ENCODE measurements at regions of chr21 and their contacts with region 1.

Region 1: GRCh38 chr21:32770871-32771523 is 558 bp downstream of the PAXBP1 start:
- DNase-seq: peak; percentile 69
- H3K4me3 Mint-ChIP-seq: peak overlapping the region; percentile 98
- H3K27ac Mint-ChIP-seq: peak overlapping the region; percentile 93
- H3K4me1 Mint-ChIP-seq: peaks cover 61% of the 10 kb centered on the region
- H3K27me3 Mint-ChIP-seq: peaks cover 3% of the 10 kb centered on the region

Region 2: DNA sequence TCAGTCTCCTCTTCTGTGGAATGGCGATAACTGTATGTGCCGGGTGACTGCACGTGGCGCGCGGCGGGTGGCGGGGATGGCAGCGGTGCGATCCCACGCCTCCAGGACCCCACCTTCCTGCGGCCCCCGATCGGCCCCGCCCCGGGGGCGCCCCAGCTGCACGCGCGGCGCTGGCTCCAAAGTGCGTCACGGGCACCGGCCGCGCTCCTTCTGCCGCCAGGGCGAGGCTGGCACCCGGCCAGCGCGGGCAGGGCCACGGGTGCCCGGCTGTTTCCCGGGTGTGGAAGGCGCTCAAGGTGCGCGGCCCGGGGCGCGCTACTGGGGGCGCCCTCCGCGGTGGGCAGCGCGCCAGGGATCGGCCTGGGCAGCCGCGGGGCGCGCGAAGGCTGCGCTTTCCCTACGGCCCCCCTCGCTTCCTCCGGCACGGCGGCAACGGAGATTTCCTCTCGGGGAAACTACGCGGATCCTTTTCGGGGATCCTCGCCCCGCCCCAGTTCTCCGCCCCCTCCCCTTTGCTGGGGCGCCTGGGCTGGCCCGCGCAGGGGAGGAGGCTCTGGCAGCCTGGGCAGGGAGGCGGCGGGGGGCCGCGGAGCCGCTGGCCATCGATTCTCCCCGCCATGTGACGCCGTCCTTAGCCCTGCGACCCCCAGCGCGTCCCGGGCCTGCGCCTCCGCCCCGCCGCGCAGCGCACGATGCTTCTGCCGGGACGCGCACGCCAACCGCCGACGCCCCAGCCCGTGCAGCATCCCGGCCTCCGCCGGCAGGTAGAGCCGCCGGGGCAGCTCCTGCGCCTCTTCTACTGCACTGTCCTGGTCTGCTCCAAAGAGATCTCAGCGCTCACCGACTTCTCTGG is 358.6 kb before region 1 on chr21 and contains the start of gene EVA1C:
- CTCF ChIA-PET with region 1: no interaction called
- POLR2A ChIA-PET with region 1: no interaction called
- intact Hi-C with region 1: loop called (anchors 1 kb)
- DNase-seq: peak; percentile 76
- H3K4me3 Mint-ChIP-seq: peak within 1 kb of the TSS; percentile 91
- H3K27ac Mint-ChIP-seq: peak within 1 kb of the TSS; percentile 89
- H3K4me1 Mint-ChIP-seq: peaks cover 33% of the 10 kb centered on the region
- H3K27me3 Mint-ChIP-seq: no peaks in the 10 kb centered on the region
- total RNA-seq, gene EVA1C: 9.3 to 9.6 TPM

Region 3: DNA sequence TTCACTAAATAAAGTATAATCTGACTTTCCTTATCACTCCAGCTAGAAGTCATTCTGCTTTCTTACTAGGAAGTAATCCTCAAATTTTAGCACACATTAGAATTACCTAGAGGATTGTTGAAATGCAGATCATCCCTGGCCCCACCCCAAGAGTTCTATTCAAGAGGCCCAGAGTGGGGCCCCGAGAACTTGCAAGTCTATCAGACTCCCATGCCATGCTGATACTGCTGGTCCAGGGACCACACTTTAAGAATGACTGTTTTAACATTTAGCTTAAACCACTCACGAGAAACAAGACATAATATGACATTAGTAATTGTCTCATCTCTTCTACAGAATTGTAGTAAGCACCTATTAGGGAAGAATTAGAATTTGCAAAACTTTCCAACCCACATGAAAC is 35.5 kb before region 1 on chr21:
- CTCF ChIA-PET with region 1: interaction called, 4 read pairs
- POLR2A ChIA-PET with region 1: interaction called, 10 read pairs
- intact Hi-C with region 1: no loop called
- DNase-seq: peak; percentile 36
- H3K4me3 Mint-ChIP-seq: no peak overlapping the region
- H3K27ac Mint-ChIP-seq: peak overlapping the region; percentile 46
- H3K4me1 Mint-ChIP-seq: peaks cover 48% of the 10 kb centered on the region
- H3K27me3 Mint-ChIP-seq: no peaks in the 10 kb centered on the region

Region 4: GRCh38 chr21:32858628-32859027 is 87.6 kb after region 1 on chr21:
- CTCF ChIA-PET with region 1: no interaction called
- POLR2A ChIA-PET with region 1: no interaction called
- intact Hi-C with region 1: no loop called
- DNase-seq: no peak
- H3K4me3 Mint-ChIP-seq: no peak overlapping the region
- H3K27ac Mint-ChIP-seq: no peak overlapping the region
- H3K4me1 Mint-ChIP-seq: no peaks in the 10 kb centered on the region
- H3K27me3 Mint-ChIP-seq: peaks cover 12% of the 10 kb centered on the region

Region 5: GRCh38 chr21:32929633-32930038 is 158.6 kb after region 1 on chr21:
- CTCF ChIA-PET with region 1: interaction called, 3 read pairs
- POLR2A ChIA-PET with region 1: no interaction called
- intact Hi-C with region 1: loop called (anchors 2 kb)
- DNase-seq: peak; percentile 34
- H3K4me3 Mint-ChIP-seq: peak overlapping the region; percentile 33
- H3K27ac Mint-ChIP-seq: peak overlapping the region; percentile 43
- H3K4me1 Mint-ChIP-seq: peaks cover 40% of the 10 kb centered on the region
- H3K27me3 Mint-ChIP-seq: no peaks in the 10 kb centered on the region

Region 6: DNA sequence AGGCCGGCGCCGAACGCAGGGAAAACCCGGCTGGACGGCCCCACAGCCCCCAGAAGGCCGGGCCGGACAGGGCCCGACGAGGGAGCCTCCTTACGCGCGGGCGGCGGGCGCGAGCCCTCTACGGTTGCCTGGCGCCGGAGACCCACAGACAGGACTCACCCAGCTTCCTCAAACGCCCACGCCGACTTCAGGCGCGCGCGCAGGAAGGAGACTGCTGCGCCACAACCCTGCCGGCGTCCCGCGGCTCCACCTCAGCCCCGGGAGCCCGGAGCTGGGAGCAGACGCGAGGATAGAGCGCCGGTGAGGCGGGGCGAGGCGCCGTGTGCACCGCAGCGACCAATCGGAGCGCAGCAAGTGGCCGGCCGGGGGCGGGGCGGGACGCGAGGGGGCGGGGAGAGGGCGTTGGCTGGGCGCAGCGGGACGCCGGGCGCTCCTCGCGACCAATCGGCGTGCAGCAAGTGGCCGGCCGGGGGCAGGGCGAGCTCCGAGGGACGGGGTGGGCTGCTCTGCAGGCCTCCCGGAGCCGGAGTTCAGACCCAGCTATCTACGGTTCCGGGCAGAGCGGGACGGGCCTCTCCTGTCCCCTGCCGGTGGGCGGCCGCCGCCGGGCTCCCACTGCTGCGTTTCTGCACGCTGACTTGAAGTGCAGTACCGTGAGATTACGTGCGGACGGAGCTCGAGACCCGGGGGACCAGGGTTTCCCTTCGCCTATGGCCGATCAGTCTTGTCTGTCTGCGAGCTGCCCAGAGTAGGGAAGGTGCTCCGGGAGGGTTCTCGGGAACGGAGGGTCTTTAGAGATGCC is 708.9 kb after region 1 on chr21 and contains the start of gene TMEM50B:
- CTCF ChIA-PET with region 1: no interaction called
- POLR2A ChIA-PET with region 1: no interaction called
- intact Hi-C with region 1: loop called (anchors 5 kb)
- DNase-seq: peak; percentile 99
- H3K4me3 Mint-ChIP-seq: peak within 1 kb of the TSS; percentile 92
- H3K27ac Mint-ChIP-seq: peak within 1 kb of the TSS; percentile 79
- H3K4me1 Mint-ChIP-seq: peaks cover 19% of the 10 kb centered on the region
- H3K27me3 Mint-ChIP-seq: no peaks in the 10 kb centered on the region
- total RNA-seq, gene TMEM50B: 18.6 to 21.8 TPM

Measured in activated CD4-positive, alpha-beta memory T cell treated with anti-CD3 and anti-CD28 coated beads for 36 hours (primary cell).